B cell (primary cell): ENCODE measurements at regions of chr15 and their contacts with region 1.

Region 1: DNA sequence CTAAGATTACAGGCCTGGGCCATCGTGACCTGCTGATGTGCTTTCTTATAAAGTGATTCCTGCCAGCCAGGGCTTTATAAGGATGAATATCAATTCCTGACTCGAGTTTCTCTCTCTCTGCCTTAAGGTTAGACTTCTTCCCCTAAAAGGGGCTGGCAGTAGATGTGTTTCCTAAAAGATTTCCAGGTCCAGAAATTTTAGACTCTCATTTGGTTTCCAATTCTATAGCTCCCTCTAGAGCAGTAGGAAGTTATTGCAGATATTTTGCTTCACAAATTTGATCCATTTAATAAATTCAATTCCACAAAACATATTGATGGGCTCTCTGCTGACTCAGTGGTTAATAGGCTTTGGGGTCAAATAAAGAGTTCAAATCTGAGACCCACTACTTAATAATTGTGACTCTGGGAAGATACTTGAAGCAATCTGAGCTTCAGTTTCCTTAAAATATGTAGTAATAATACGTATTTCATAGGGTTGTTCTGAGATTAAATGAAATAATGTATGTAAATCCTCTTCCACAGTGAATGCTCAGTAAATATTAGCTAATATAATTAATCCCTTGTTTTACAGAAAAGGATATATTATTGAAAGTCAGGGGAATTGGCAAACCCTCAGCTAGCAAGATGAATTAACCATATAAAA is 2.1 kb downstream of the TRIM69 start:
- DNase-seq: peak; percentile 76
- ATAC-seq: peak; percentile 32
- H3K4me3 ChIP-seq: no peak overlapping the region
- H3K4me3 Mint-ChIP-seq: no peak overlapping the region
- H3K27ac ChIP-seq: no peak overlapping the region
- H3K27ac Mint-ChIP-seq: peak overlapping the region; percentile 20
- H3K4me1 ChIP-seq: peaks cover 23 to 27% of the 10 kb centered on the region in 2 donors
- H3K4me1 Mint-ChIP-seq: peaks cover 34% of the 10 kb centered on the region
- H3K27me3 ChIP-seq: no peaks in the 10 kb centered on the region
- H3K27me3 Mint-ChIP-seq: no peaks in the 10 kb centered on the region
- CTCF ChIP-seq: peak; percentile 90

Region 2: GRCh38 chr15:44584162-44584749 is 154.2 kb before region 1 on chr15:
- CTCF ChIA-PET with region 1: interaction called, 97 read pairs
- POLR2A ChIA-PET with region 1: interaction called, 5 read pairs
- intact Hi-C with region 1: no loop called
- DNase-seq: peak; percentile 63
- ATAC-seq: peak; percentile 76
- H3K4me3 ChIP-seq: no peak overlapping the region
- H3K4me3 Mint-ChIP-seq: no peak overlapping the region
- H3K27ac ChIP-seq: peak overlapping the region in 1 of 2 donors; percentile 18
- H3K27ac Mint-ChIP-seq: no peak overlapping the region
- H3K4me1 ChIP-seq: no peaks in the 10 kb centered on the region
- H3K4me1 Mint-ChIP-seq: peaks cover 3% of the 10 kb centered on the region
- H3K27me3 ChIP-seq: no peaks in the 10 kb centered on the region
- H3K27me3 Mint-ChIP-seq: no peaks in the 10 kb centered on the region
- CTCF ChIP-seq: peak; percentile 56

Region 3: DNA sequence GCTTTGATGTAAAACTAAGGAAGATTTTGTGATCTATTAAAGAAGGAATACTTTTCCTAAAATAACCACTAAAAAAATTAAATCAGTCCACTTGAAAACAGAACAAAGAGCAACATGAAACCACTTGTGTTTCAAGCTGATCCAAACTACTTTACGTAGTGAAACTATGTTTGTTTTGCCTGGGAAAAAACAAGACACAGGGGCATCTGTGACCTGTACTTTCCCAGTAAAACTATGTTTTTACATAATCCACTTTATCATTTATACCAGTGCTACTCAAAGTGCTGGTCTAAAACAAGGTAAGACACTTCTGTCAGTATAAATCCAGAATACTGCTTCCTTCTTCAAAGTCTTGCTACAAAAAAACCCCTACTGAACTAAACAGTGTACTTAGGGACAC is 131.7 kb before region 1 on chr15:
- CTCF ChIA-PET with region 1: interaction called, 11 read pairs
- POLR2A ChIA-PET with region 1: no interaction called
- intact Hi-C with region 1: no loop called
- DNase-seq: no peak
- ATAC-seq: no peak
- H3K4me3 ChIP-seq: no peak overlapping the region
- H3K4me3 Mint-ChIP-seq: no peak overlapping the region
- H3K27ac ChIP-seq: no peak overlapping the region
- H3K27ac Mint-ChIP-seq: no peak overlapping the region
- H3K4me1 ChIP-seq: no peaks in the 10 kb centered on the region
- H3K4me1 Mint-ChIP-seq: no peaks in the 10 kb centered on the region
- H3K27me3 ChIP-seq: no peaks in the 10 kb centered on the region
- H3K27me3 Mint-ChIP-seq: no peaks in the 10 kb centered on the region
- CTCF ChIP-seq: no peak

Region 4: GRCh38 chr15:44676676-44677075 is 61.8 kb before region 1 on chr15:
- CTCF ChIA-PET with region 1: interaction called, 24 read pairs
- POLR2A ChIA-PET with region 1: interaction called, 819 read pairs
- intact Hi-C with region 1: no loop called
- DNase-seq: peak; percentile 34
- ATAC-seq: peak; percentile 46
- H3K4me3 ChIP-seq: peak overlapping the region in 2 of 5 experiments; percentile 13 to 26
- H3K4me3 Mint-ChIP-seq: peak overlapping the region; percentile 75
- H3K27ac ChIP-seq: peak overlapping the region; percentile 80 to 87
- H3K27ac Mint-ChIP-seq: peak overlapping the region; percentile 91
- H3K4me1 ChIP-seq: peaks cover 69 to 77% of the 10 kb centered on the region in 2 donors
- H3K4me1 Mint-ChIP-seq: peaks cover 80% of the 10 kb centered on the region
- H3K27me3 ChIP-seq: no peaks in the 10 kb centered on the region
- H3K27me3 Mint-ChIP-seq: no peaks in the 10 kb centered on the region
- CTCF ChIP-seq: no peak

Region 5: GRCh38 chr15:44711356-44712107 is 26.9 kb before region 1 on chr15 and contains the start of gene B2M:
- CTCF ChIA-PET with region 1: interaction called, 529 read pairs
- POLR2A ChIA-PET with region 1: interaction called, 759 read pairs
- intact Hi-C with region 1: loop called (anchors 1 kb)
- DNase-seq: peak; percentile 99
- ATAC-seq: peak; percentile 75
- H3K4me3 ChIP-seq: peak within 1 kb of the TSS; percentile 90 to 100 (median 100)
- H3K4me3 Mint-ChIP-seq: peak within 1 kb of the TSS; percentile 99
- H3K27ac ChIP-seq: peak within 1 kb of the TSS; percentile 99 to 100
- H3K27ac Mint-ChIP-seq: peak within 1 kb of the TSS; percentile 100
- H3K4me1 ChIP-seq: peaks cover 39 to 46% of the 10 kb centered on the region in 2 donors
- H3K4me1 Mint-ChIP-seq: peaks cover 44% of the 10 kb centered on the region
- H3K27me3 ChIP-seq: no peaks in the 10 kb centered on the region
- H3K27me3 Mint-ChIP-seq: no peaks in the 10 kb centered on the region
- CTCF ChIP-seq: no peak
- total RNA-seq, gene B2M: 3,928 and 3,981 TPM in 2 replicates

Region 6: GRCh38 chr15:44798826-44799225 is 60.4 kb after region 1 on chr15:
- CTCF ChIA-PET with region 1: no interaction called
- POLR2A ChIA-PET with region 1: no interaction called
- intact Hi-C with region 1: no loop called
- DNase-seq: no peak
- ATAC-seq: no peak
- H3K4me3 ChIP-seq: no peak overlapping the region
- H3K4me3 Mint-ChIP-seq: no peak overlapping the region
- H3K27ac ChIP-seq: no peak overlapping the region
- H3K27ac Mint-ChIP-seq: no peak overlapping the region
- H3K4me1 ChIP-seq: no peaks in the 10 kb centered on the region
- H3K4me1 Mint-ChIP-seq: no peaks in the 10 kb centered on the region
- H3K27me3 ChIP-seq: peaks cover 0 to 3% (median 1%) of the 10 kb centered on the region in 4 experiments
- H3K27me3 Mint-ChIP-seq: peaks cover 17% of the 10 kb centered on the region
- CTCF ChIP-seq: no peak